ENCODE measurements at regions of chr5 and their contacts with region 1.

Region 1: GRCh38 chr5:139633295-139634027 is 14.7 kb upstream of the CXXC5 start:
- DNase-seq: peak in 9 of 10 donors; percentile 69 to 86 (median 77)
- H3K4me3 ChIP-seq: peak overlapping the region in 1 of 59 donors; percentile 3
- H3K27ac ChIP-seq: peak overlapping the region in 25 of 59 donors; percentile 0 to 95 (median 31)
- H3K27me3 ChIP-seq: no peaks in the 10 kb centered on the region
- CTCF ChIP-seq: peak; percentile 76 to 100 (median 98)

Region 2: DNA sequence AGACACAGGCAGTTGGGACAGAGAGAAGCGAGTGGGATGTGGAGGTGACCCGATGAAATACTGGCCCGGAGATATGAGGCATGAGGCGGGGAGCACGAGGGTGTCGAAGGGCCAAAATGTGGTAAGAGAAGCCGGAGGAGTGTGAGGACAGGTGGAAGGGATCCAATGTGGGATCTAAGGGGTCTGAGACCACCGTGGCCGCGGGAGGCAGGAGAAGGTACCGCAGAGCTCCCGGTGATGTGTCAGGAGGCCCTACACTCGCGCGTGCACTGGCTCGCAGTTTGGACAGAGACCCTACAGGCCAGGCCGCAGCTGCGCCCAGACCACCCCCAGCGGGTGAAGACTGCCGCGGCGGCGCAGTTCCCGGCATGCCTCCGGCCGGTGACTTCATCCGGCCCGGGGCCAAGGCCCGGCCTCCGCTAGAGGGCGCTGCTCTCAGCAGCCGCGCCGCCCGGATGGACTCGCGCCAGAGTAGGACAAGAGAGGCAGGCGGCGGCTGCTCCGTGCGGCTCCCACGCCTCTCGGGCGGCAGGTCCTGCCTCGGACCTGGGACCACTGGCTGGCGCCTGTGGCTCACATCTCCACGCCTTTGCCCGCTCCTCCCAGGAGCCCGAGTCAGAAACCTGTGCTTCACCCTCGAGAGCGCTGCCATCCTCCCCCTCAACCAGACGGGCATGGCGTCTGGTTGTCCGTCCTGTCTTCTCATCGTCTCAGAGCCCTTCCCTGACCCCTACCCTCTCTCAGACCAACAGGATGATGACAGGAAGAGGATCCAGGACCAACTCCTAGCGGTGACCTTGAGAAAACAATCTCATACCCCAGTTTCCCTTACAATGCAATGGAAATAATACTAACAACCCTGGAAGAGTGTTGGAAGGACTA is 115.5 kb before region 1 on chr5:
- intact Hi-C with region 1: loop called in 1 of 2 experiments (anchors 5 kb)
- DNase-seq: peak; percentile 86 to 93 (median 90)
- H3K4me3 ChIP-seq: peak overlapping the region; percentile 43 to 87 (median 67)
- H3K27ac ChIP-seq: peak overlapping the region; percentile 73 to 99 (median 95)
- H3K27me3 ChIP-seq: no peaks in the 10 kb centered on the region
- CTCF ChIP-seq: peak; percentile 87 to 99 (median 97)

Region 3: GRCh38 chr5:139574641-139575312 is 58.7 kb before region 1 on chr5:
- intact Hi-C with region 1: loop called in 1 of 2 experiments (anchors 5 kb)
- DNase-seq: no peak
- H3K4me3 ChIP-seq: no peak overlapping the region
- H3K27ac ChIP-seq: no peak overlapping the region
- H3K27me3 ChIP-seq: no peaks in the 10 kb centered on the region
- CTCF ChIP-seq: peak in 52 of 56 donors; percentile 17 to 75 (median 54)

Region 4: DNA sequence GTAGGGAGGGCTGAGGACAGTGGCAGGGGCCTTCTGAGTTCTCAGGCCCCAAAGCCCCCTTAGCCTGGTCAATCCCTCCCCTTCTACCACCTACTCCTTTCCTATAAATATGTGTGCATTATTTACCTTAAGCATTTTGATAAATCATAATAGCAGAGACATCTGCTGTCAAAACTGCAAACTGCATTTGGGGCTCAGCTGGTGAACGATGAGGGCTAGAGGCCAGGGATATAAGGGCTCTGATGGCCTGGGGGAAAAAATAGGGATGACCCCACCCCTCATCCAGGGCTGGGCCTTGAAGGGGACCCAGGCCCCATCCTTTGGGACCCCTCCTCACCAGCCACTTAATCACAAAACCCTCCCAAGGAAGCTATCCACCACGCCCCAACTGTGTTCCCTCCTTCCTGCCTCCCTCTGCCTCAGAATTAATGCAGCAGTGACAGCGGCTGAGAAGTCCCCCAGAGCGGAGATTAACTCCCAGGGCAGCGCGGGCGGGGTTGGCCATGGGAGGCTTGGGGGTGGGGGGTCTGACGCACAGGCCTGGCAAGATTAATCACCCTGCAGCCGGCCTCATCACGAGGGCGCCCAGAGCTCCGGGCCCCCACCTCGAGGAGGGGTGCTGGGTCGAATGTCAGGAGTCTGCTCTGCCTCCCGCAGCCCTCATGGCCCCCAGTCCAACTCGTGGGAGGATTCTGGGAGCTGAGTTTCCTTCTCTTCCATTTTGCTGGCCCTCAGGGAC is 56.8 kb after region 1 on chr5:
- intact Hi-C with region 1: loop called (anchors 1 to 5 kb)
- DNase-seq: peak in 1 of 10 donors; percentile 70
- H3K4me3 ChIP-seq: peak overlapping the region in 16 of 59 donors; percentile 3 to 44 (median 22)
- H3K27ac ChIP-seq: peak overlapping the region; percentile 60 to 100 (median 97)
- H3K27me3 ChIP-seq: no peaks in the 10 kb centered on the region
- CTCF ChIP-seq: peak in 55 of 56 donors; percentile 48 to 83 (median 68)

Region 5: GRCh38 chr5:139869042-139869790 is 235.8 kb after region 1 on chr5:
- intact Hi-C with region 1: loop called in 1 of 2 experiments (anchors 5 kb)
- DNase-seq: no peak
- H3K4me3 ChIP-seq: peak overlapping the region in 8 of 59 donors; percentile 2 to 26 (median 10)
- H3K27ac ChIP-seq: peak overlapping the region in 56 of 59 donors; percentile 1 to 88 (median 72)
- H3K27me3 ChIP-seq: no peaks in the 10 kb centered on the region
- CTCF ChIP-seq: no peak

Region 6: DNA sequence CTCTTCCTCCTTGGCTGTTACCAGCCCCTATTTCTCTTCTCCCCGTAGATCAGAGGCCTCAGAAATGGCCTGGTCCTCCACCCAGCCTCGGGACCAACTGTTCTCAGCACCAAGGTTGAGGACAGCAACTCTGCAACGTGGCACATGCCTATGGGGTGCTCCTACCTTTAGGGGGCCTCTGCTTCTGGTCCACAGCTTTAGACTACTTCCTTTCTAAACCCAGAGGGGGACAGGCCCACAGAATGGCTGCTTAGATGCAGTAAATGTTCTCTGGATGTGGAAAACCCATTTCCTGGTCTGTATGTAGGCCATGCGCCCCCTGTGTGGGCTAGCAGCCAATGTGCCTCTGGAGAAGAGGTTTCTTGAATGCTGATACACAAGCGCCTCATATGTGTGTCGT is 341.2 kb after region 1 on chr5:
- intact Hi-C with region 1: loop called (anchors 10 kb)
- DNase-seq: no peak
- H3K4me3 ChIP-seq: no peak overlapping the region
- H3K27ac ChIP-seq: no peak overlapping the region
- H3K27me3 ChIP-seq: no peaks in the 10 kb centered on the region
- CTCF ChIP-seq: no peak